Activated naive CD8-positive, alpha-beta T cell treated with anti-CD3 and anti-CD28 coated beads, Interleukin-2, amount 10 ng/mL, durations not matched to agents 7 days and 5 days (primary cell): ENCODE measurements at regions of chr16 and their contacts with region 1.

Region 1: DNA sequence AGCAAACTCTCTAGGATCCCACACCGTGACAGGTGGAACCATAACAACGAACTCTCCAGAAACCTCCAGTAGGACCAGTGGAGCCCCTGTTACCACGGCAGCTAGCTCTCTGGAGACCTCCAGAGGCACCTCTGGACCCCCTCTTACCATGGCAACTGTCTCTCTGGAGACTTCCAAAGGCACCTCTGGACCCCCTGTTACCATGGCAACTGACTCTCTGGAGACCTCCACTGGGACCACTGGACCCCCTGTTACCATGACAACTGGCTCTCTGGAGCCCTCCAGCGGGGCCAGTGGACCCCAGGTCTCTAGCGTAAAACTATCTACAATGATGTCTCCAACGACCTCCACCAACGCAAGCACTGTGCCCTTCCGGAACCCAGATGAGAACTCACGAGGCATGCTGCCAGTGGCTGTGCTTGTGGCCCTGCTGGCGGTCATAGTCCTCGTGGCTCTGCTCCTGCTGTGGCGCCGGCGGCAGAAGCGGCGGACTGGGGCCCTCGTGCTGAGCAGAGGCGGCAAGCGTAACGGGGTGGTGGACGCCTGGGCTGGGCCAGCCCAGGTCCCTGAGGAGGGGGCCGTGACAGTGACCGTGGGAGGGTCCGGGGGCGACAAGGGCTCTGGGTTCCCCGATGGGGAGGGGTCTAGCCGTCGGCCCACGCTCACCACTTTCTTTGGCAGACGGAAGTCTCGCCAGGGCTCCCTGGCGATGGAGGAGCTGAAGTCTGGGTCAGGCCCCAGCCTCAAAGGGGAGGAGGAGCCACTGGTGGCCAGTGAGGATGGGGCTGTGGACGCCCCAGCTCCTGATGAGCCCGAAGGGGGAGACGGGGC is 1.3 kb downstream of the SPN start:
- DNase-seq: peak; percentile 55
- ATAC-seq: no peak
- H3K4me3 Mint-ChIP-seq: peak overlapping the region; percentile 99
- H3K27ac Mint-ChIP-seq: peak overlapping the region; percentile 98
- H3K4me1 Mint-ChIP-seq: peaks cover 45% of the 10 kb centered on the region
- H3K27me3 Mint-ChIP-seq: no peaks in the 10 kb centered on the region

Region 2: GRCh38 chr16:29649588-29650494 is 14.5 kb before region 1 on chr16:
- POLR2A ChIA-PET with region 1: interaction called, 22 read pairs
- DNase-seq: no peak
- ATAC-seq: peak; percentile 12
- H3K4me3 Mint-ChIP-seq: peak overlapping the region; percentile 65
- H3K27ac Mint-ChIP-seq: peak overlapping the region; percentile 85
- H3K4me1 Mint-ChIP-seq: peaks cover 24% of the 10 kb centered on the region
- H3K27me3 Mint-ChIP-seq: no peaks in the 10 kb centered on the region

Region 3: DNA sequence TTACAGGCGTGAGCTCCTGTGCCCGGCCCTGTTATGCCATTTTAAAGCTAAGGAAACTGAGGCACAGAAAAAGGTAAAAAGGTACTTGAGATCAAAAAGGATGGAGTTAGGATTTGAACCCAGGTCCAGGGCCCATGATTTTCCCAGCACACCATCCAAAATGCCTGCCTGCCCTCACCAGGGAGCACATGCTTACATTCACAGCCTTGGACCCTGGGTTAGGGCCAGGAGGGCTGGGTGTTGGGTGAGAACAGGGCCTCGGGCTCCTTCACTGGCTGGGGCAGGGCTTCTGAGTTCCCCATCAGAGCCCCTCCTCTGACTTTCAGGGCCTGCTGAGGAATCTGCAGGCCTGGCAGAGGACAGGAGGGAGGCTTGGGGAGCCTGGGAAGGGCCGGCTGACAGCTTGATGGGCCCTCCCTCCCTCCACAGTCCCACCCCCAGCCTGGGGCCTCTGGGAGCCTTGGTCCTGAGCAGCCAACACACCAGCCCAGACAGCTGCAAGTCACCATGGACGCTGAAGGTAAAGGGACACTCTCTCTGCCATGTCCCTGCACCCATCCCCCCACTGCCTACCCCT is 14.5 kb after region 1 on chr16 and contains the start of gene QPRT:
- POLR2A ChIA-PET with region 1: interaction called, 32 read pairs
- DNase-seq: no peak
- ATAC-seq: peak; percentile 9
- H3K4me3 Mint-ChIP-seq: peak within 1 kb of the TSS; percentile 82
- H3K27ac Mint-ChIP-seq: peak within 1 kb of the TSS; percentile 86
- H3K4me1 Mint-ChIP-seq: peaks cover 23% of the 10 kb centered on the region
- H3K27me3 Mint-ChIP-seq: no peaks in the 10 kb centered on the region
- total RNA-seq, gene QPRT: 7.4 to 10.0 TPM